CD8-positive, alpha-beta memory T cell (primary cell): ENCODE measurements at regions of chr15 and their contacts with region 1.

Region 1: GRCh38 chr15:48810414-48811317 is at the start of gene CEP152:
- DNase-seq: peak; percentile 97 to 99 (median 98)
- H3K4me3 ChIP-seq: peak within 1 kb of the TSS; percentile 84
- H3K4me3 Mint-ChIP-seq: peak within 1 kb of the TSS; percentile 89 to 98 (median 93)
- H3K27ac ChIP-seq: peak within 1 kb of the TSS; percentile 69
- H3K27ac Mint-ChIP-seq: peak within 1 kb of the TSS; percentile 70 to 97 (median 90)
- H3K4me1 ChIP-seq: peaks cover 14% of the 10 kb centered on the region
- H3K4me1 Mint-ChIP-seq: peaks cover 15 to 38% (median 34%) of the 10 kb centered on the region in 3 donors
- H3K27me3 ChIP-seq: no peaks in the 10 kb centered on the region
- H3K27me3 Mint-ChIP-seq: peaks cover 5% of the 10 kb centered on the region in 2 donors
- total RNA-seq, gene CEP152: 19.7 to 20.7 TPM

Region 2: DNA sequence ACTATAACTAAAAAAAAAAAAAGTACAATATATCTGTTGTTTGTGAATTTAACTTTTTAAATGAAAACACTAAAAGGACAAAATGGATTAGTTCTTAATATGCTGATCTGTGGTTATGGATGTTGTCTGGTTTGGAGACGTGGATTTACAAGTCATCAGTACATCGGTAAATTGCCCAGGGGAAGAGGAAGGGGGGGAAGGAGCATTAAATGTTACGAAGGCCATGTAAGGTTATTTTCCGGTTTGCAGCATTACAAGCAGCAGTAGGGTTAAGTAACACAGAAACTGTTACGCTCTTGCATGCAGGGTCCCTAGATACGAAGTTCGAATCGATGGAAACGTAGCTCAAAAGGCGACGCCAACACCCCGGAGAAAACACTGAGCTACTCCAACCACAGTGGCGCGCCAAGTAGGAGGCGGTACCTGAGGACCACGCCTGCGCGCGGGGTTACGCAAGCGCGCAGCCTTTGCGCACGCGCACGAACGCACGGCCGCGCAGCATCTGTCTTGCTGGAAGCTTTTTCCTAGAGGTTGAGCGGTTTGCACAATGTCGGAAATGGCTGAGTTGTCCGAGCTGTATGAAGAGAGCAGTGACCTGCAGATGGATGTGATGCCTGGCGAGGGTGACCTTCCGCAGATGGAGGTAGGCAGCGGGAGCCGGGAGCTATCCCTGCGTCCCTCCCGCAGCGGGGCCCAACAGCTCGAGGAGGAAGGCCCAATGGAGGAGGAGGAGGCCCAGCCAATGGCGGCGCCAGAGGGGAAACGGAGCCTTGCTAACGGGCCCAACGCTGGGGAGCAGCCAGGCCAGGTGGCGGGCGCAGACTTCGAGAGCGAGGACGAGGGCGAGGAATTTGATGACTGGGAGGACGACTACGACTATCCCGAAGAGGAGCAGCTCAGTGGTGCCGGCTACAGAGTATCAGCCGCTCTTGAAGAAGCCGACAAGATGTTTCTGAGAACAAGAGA is 67.2 kb after region 1 on chr15 and contains the start of gene EID1:
- CTCF ChIA-PET with region 1: interaction called, 4 read pairs
- POLR2A ChIA-PET with region 1: interaction called, 15 read pairs
- DNase-seq: peak; percentile 89 to 94 (median 92)
- H3K4me3 ChIP-seq: peak within 1 kb of the TSS; percentile 88
- H3K4me3 Mint-ChIP-seq: peak within 1 kb of the TSS; percentile 96 to 100 (median 99)
- H3K27ac ChIP-seq: peak within 1 kb of the TSS; percentile 84
- H3K27ac Mint-ChIP-seq: peak within 1 kb of the TSS; percentile 92 to 100 (median 98)
- H3K4me1 ChIP-seq: peaks cover 13% of the 10 kb centered on the region
- H3K4me1 Mint-ChIP-seq: peaks cover 24 to 33% (median 32%) of the 10 kb centered on the region in 3 donors
- H3K27me3 ChIP-seq: no peaks in the 10 kb centered on the region
- H3K27me3 Mint-ChIP-seq: peaks cover 13 to 14% of the 10 kb centered on the region in 2 donors
- total RNA-seq, gene EID1: 113 to 125 TPM